CD8-positive, alpha-beta memory T cell (primary cell): ENCODE measurements at regions of chr11 and their contacts with region 1.

Region 1: GRCh38 chr11:115180272-115180671 is 323.9 kb downstream of the CADM1 start:
- DNase-seq: no peak
- H3K4me3 ChIP-seq: no peak overlapping the region
- H3K4me3 Mint-ChIP-seq: no peak overlapping the region
- H3K27ac ChIP-seq: no peak overlapping the region
- H3K27ac Mint-ChIP-seq: no peak overlapping the region
- H3K4me1 ChIP-seq: no peaks in the 10 kb centered on the region
- H3K4me1 Mint-ChIP-seq: no peaks in the 10 kb centered on the region
- H3K27me3 ChIP-seq: no peaks in the 10 kb centered on the region
- H3K27me3 Mint-ChIP-seq: peaks cover 0 to 4% of the 10 kb centered on the region in 2 donors

Region 2: GRCh38 chr11:115169251-115169650 is 11.0 kb before region 1 on chr11:
- CTCF ChIA-PET with region 1: no interaction called
- POLR2A ChIA-PET with region 1: interaction called, 10 read pairs
- DNase-seq: no peak
- H3K4me3 ChIP-seq: no peak overlapping the region
- H3K4me3 Mint-ChIP-seq: no peak overlapping the region
- H3K27ac ChIP-seq: no peak overlapping the region
- H3K27ac Mint-ChIP-seq: no peak overlapping the region
- H3K4me1 ChIP-seq: no peaks in the 10 kb centered on the region
- H3K4me1 Mint-ChIP-seq: no peaks in the 10 kb centered on the region
- H3K27me3 ChIP-seq: no peaks in the 10 kb centered on the region
- H3K27me3 Mint-ChIP-seq: peaks cover 9 to 14% of the 10 kb centered on the region in 2 donors

Region 3: DNA sequence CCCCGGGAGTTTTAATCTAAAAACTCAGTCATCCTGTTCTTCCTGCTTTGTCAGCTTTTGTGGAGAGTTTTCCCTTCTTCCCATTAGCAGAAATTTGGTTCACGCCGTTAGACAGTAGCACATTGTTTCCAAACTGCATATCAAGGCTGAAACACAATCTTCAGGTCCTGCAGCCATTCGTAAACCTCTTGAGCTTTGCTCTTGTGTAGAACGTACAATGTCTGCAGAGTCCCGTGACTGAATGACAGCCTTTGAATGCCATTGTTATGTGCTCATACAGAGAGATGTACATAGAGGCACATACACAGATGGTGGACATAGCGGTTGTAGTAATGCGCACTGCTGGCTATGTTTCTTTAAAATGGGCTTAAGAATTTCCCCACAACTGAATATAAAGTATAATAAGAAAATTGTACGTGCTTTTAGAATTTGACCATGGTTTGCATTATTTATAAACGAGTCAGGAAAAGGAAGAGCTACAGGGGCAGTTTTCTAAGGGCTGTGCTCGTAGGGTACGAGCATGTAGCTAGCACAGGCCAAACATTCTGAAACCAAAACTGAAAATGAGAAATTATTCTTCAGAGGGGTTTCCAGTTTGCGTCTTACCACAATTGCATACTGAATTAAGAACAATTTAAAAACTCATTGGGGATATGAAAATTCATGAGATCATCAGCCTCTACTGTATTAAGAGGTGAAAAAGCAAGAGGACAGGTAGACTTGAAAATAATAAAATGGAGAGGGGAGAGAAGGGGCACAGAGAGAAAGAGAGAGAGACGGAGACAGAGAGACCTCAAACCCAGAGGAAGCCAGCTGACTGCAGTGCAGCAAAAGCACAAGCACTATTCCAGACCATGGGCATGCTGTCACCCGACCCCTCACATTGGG is 13.9 kb after region 1 on chr11:
- CTCF ChIA-PET with region 1: no interaction called
- POLR2A ChIA-PET with region 1: no interaction called
- DNase-seq: no peak
- H3K4me3 ChIP-seq: peak overlapping the region; percentile 13
- H3K4me3 Mint-ChIP-seq: peak overlapping the region; percentile 39 to 91 (median 77)
- H3K27ac ChIP-seq: no peak overlapping the region
- H3K27ac Mint-ChIP-seq: peak overlapping the region in 7 of 8 donors; percentile 41 to 93 (median 77)
- H3K4me1 ChIP-seq: no peaks in the 10 kb centered on the region
- H3K4me1 Mint-ChIP-seq: peaks cover 11 to 23% (median 18%) of the 10 kb centered on the region in 3 donors
- H3K27me3 ChIP-seq: no peaks in the 10 kb centered on the region
- H3K27me3 Mint-ChIP-seq: no peaks in the 10 kb centered on the region

Region 4: DNA sequence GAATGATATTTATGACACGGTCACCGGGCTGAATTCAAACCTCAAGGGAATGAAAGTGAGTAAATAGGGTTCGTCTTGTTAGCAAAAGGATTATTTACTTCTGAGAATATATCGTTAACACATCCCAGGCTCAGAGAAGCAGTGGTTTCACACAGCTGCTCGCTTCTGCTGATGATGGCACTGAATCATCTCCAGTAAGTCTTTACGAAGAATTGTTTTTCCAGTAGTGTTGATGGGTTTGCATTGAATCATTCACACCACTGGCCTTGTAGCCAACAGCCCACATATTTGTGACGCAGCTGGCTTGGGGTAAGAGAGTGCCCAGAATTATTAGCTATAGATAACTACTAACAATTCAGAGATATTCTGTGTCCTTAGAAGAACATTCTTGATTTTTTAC is 87.6 kb after region 1 on chr11:
- CTCF ChIA-PET with region 1: no interaction called
- POLR2A ChIA-PET with region 1: no interaction called
- DNase-seq: no peak
- H3K4me3 ChIP-seq: no peak overlapping the region
- H3K4me3 Mint-ChIP-seq: peak overlapping the region in 2 of 7 donors; percentile 15 to 23
- H3K27ac ChIP-seq: no peak overlapping the region
- H3K27ac Mint-ChIP-seq: peak overlapping the region in 3 of 8 donors; percentile 32 to 58 (median 50)
- H3K4me1 ChIP-seq: no peaks in the 10 kb centered on the region
- H3K4me1 Mint-ChIP-seq: no peaks in the 10 kb centered on the region
- H3K27me3 ChIP-seq: no peaks in the 10 kb centered on the region
- H3K27me3 Mint-ChIP-seq: no peaks in the 10 kb centered on the region

Region 5: DNA sequence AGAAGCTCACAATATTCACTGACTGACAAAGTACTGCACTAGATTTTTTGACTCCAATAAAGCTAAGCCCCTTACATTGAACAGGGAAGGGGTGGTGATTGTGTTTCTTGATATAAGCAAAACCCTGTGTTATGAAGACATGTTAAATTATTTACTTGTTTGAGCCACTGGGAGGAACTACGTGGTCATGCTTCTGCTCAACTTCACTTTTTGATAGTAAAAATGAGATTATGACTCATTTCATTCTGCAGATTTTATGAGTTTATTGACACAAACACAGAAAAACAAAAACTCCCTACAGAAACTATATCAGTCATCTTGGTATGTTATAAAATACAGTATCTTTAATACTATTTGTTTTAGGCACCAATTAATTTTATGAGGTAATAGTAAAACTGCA is 199.3 kb after region 1 on chr11:
- CTCF ChIA-PET with region 1: no interaction called
- POLR2A ChIA-PET with region 1: no interaction called
- DNase-seq: no peak
- H3K4me3 ChIP-seq: no peak overlapping the region
- H3K4me3 Mint-ChIP-seq: no peak overlapping the region
- H3K27ac ChIP-seq: no peak overlapping the region
- H3K27ac Mint-ChIP-seq: no peak overlapping the region
- H3K4me1 ChIP-seq: no peaks in the 10 kb centered on the region
- H3K4me1 Mint-ChIP-seq: no peaks in the 10 kb centered on the region
- H3K27me3 ChIP-seq: no peaks in the 10 kb centered on the region
- H3K27me3 Mint-ChIP-seq: peaks cover 0 to 11% of the 10 kb centered on the region in 2 donors

Region 6: GRCh38 chr11:116901211-116901610 is 1720.9 kb after region 1 on chr11:
- CTCF ChIA-PET with region 1: no interaction called
- POLR2A ChIA-PET with region 1: no interaction called
- DNase-seq: no peak
- H3K4me3 ChIP-seq: no peak overlapping the region
- H3K4me3 Mint-ChIP-seq: no peak overlapping the region
- H3K27ac ChIP-seq: no peak overlapping the region
- H3K27ac Mint-ChIP-seq: peak overlapping the region in 3 of 8 donors; percentile 49 to 81 (median 69)
- H3K4me1 ChIP-seq: peaks cover 15% of the 10 kb centered on the region
- H3K4me1 Mint-ChIP-seq: peaks cover 37 to 44% (median 44%) of the 10 kb centered on the region in 3 donors
- H3K27me3 ChIP-seq: no peaks in the 10 kb centered on the region
- H3K27me3 Mint-ChIP-seq: peaks cover 0 to 2% of the 10 kb centered on the region in 2 donors